H1 (cell line): ENCODE measurements at regions of chr17 and their contacts with region 1.

Region 1: GRCh38 chr17:4948931-4949320 is 596 bp upstream of the PFN1 start:
- DNase-seq: peak in 1 of 2 experiments; percentile 85
- H3K4me3 ChIP-seq: peak overlapping the region; percentile 87 to 99 (median 96)
- H3K27ac ChIP-seq: peak overlapping the region; percentile 94; the same call in 1 of the 2 replicates
- H3K4me1 ChIP-seq: peaks cover 4 to 17% (median 12%) of the 10 kb centered on the region in 4 experiments
- H3K27me3 ChIP-seq: no peaks in the 10 kb centered on the region
- CTCF ChIP-seq: no peak
- EP300 ChIP-seq: no peak
- POLR2A ChIP-seq: peak in 1 of 2 experiments; percentile 25; a peak in 2 of 3 replicates
- RAD21 ChIP-seq: no peak

Region 2: DNA sequence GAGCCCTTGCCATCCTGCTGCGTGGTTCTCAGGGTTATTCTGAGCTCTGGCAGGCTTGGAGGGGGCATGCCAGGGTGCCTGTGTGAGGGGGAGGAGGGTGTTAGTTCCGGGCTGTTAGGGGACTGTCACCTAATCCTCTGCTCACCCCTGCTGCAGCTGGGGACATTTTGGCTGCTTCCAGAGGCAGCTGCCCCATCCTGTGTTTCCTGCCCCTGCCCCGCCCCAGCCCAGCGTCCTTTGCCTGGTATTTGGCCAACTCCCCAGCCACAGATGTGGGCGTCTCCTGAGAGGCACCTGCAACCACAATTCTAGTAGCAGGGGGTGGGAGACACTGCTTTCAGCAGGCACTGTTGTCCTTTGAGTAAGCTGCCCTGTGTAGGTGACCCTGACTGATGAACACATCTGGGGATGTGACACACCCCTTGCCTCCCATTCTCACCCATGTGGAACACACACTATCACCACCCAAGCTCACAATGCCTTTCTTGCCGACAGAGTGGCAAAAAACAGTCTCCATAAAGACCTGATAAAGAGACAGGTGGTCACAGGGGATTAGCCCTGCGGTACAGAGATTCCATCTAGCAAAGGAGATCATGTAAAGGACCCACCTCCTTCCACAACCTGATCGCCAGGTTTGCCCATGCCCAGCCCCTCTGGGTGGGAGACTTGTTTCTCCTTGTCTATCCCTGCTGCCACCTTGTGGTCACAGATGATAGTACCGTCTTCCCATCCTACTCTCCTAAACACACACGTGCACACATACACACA is 45.7 kb before region 1 on chr17 and contains the start of gene CHRNE:
- CTCF ChIA-PET with region 1: interaction called, 4 read pairs
- POLR2A ChIA-PET with region 1: interaction called, 24 read pairs
- DNase-seq: peak in 1 of 2 experiments; percentile 91
- H3K4me3 ChIP-seq: no peak within 1 kb of the TSS
- H3K27ac ChIP-seq: no peak within 1 kb of the TSS
- H3K4me1 ChIP-seq: peaks cover 3 to 14% (median 4%) of the 10 kb centered on the region in 4 experiments; a peak in 6 of 7 replicates
- H3K27me3 ChIP-seq: 0 out of 7 replicates have a peak, but pooled peaks cover 0 to 2% (median 0%) of the 10 kb centered on the region in 4 experiments
- CTCF ChIP-seq: peak; percentile 71 to 89 (median 81)
- EP300 ChIP-seq: no peak
- POLR2A ChIP-seq: no peak
- RAD21 ChIP-seq: peak; percentile 64 to 75
- total RNA-seq, gene CHRNE: 0.15 and 0.40 TPM in 2 replicates

Region 3: GRCh38 chr17:4920351-4921048 is 28.4 kb before region 1 on chr17:
- CTCF ChIA-PET with region 1: no interaction called
- POLR2A ChIA-PET with region 1: interaction called, 13 read pairs
- DNase-seq: no peak
- H3K4me3 ChIP-seq: no peak overlapping the region
- H3K27ac ChIP-seq: no peak overlapping the region
- H3K4me1 ChIP-seq: peaks cover 0 to 5% (median 1%) of the 10 kb centered on the region in 4 experiments; a peak in 2 of 7 replicates
- H3K27me3 ChIP-seq: no peaks in the 10 kb centered on the region
- CTCF ChIP-seq: no peak
- EP300 ChIP-seq: no peak
- POLR2A ChIP-seq: no peak
- RAD21 ChIP-seq: no peak

Region 4: DNA sequence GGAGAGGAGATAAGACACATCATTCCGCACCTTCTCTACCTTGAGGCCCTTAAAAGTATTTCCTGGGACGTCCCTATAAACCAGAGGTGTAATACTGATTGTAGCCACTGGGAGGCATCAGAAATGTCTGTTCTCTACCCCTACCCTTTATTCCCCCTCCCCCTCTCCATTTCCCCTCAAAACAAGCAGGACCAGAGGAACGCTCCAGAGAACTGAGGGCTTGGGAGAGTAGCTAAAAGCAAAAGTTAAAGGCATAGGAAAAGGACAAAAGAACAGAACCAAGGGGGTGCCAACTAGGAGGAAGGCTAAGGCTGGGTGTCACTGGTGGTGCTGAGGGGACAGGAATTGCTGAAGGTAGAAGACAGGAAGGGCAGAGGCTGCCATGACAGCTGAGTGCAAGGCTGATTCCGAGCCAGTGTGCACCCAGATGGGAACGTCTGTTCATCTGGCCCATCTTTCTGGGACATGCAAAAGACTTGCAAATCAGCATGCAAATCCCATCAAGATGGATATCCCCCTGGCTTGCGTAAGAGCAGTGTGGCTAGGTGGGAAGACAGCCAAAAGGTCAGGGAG is 31.8 kb after region 1 on chr17:
- CTCF ChIA-PET with region 1: interaction called, 6 read pairs
- POLR2A ChIA-PET with region 1: interaction called, 987 read pairs
- DNase-seq: peak in 1 of 2 experiments; percentile 73
- H3K4me3 ChIP-seq: no peak overlapping the region
- H3K27ac ChIP-seq: no peak overlapping the region
- H3K4me1 ChIP-seq: peaks cover 0 to 4% (median 3%) of the 10 kb centered on the region in 4 experiments; a peak in 3 of 7 replicates
- H3K27me3 ChIP-seq: peaks cover 0 to 20% (median 18%) of the 10 kb centered on the region in 4 experiments; a peak in 6 of 7 replicates
- CTCF ChIP-seq: peak in 2 of 3 experiments; percentile 63 to 80; a peak in 3 of 4 replicates
- EP300 ChIP-seq: no peak
- POLR2A ChIP-seq: no peak
- RAD21 ChIP-seq: peak; percentile 61 to 69

Region 5: DNA sequence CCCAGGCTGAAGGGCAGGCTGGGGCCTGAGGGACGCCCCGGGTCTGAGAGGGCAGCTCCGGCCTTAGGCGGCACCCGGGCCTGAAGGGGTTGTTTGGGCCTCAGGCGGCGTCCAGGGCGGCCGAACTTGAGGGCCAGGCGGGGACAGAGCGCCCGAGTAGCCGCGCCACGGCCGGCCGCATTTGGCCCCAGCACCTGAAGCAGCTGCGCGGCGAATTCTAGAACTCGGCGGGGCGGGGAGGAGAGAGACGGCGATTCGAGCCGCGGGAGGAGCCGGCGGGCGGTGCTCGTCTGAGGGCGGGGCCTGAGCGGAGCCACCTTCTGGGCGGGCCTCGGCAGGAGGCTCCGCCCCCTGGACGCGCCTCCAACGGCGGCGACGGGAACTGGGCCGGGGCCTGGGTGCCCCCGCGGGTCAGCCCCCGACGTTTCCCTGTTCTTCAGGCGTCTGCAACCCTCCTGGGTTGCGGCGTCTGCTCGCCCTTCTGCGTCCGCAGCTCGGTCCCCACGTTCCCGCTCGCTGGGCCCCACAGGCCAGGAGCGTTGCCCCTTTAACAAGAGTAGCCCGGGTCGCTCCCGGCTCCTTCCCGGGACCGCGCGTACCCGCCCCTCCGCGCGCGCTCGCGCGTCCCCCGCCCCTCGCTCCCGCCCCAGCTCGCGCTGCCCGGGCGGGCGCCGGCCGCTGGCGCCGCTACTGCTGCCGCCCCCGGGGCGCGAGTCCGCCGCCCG is 48.5 kb after region 1 on chr17 and contains the starts of genes INCA1 and KIF1C:
- CTCF ChIA-PET with region 1: no interaction called
- POLR2A ChIA-PET with region 1: interaction called, 35 read pairs
- DNase-seq: peak; percentile 64 to 95
- H3K4me3 ChIP-seq: peak within 1 kb of the TSS; percentile 75 to 80 (median 78)
- H3K27ac ChIP-seq: peak within 1 kb of the TSS; percentile 88; the same call in 1 of the 2 replicates
- H3K4me1 ChIP-seq: peaks cover 4 to 17% (median 8%) of the 10 kb centered on the region in 4 experiments
- H3K27me3 ChIP-seq: peaks cover 0 to 13% (median 1%) of the 10 kb centered on the region in 4 experiments; a peak in 4 of 7 replicates
- CTCF ChIP-seq: no peak
- EP300 ChIP-seq: no peak; a peak in 1 of 3 replicates
- POLR2A ChIP-seq: no peak; a peak in 1 of 3 replicates
- RAD21 ChIP-seq: no peak
- total RNA-seq, gene INCA1: 1.1 and 1.4 TPM in 2 replicates
- total RNA-seq, gene KIF1C: 114 and 118 TPM in 2 replicates